CD4-positive, alpha-beta T cell (primary cell): ENCODE measurements at regions of chr6 and their contacts with region 1.

Region 1: GRCh38 chr6:156686995-156687788 is 90.0 kb upstream of the ARID1B start:
- DNase-seq: peak; percentile 53 to 94 (median 76)
- ATAC-seq: peak; percentile 76
- H3K4me3 ChIP-seq: peak overlapping the region; percentile 82
- H3K4me3 Mint-ChIP-seq: peak overlapping the region; percentile 92
- H3K27ac ChIP-seq: peak overlapping the region; percentile 91 to 97
- H3K27ac Mint-ChIP-seq: peak overlapping the region; percentile 92
- H3K4me1 ChIP-seq: peaks cover 14% of the 10 kb centered on the region
- H3K4me1 Mint-ChIP-seq: peaks cover 24% of the 10 kb centered on the region
- H3K27me3 ChIP-seq: no peaks in the 10 kb centered on the region
- H3K27me3 Mint-ChIP-seq: no peaks in the 10 kb centered on the region
- CTCF ChIP-seq: no peak

Region 2: DNA sequence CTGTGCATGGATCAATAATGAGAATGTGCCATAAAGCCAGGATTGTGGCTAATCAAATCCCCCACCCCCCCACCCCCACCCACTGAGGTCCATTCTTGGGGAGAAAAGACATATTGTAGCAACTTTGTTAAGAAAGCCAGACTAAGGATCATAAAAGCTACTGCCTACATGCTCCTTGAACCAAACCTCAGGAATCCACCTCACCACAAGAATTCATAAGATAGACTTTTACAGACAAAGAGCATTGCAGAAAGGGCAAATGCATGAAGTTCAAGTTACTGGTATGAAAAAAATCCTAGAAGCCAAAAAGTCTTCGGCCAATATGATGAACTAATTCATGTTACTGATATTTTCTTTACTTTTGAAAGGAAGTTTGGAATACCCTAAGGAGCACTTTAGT is 97.9 kb before region 1 on chr6:
- CTCF ChIA-PET with region 1: no interaction called
- POLR2A ChIA-PET with region 1: no interaction called
- intact Hi-C with region 1: no loop called
- DNase-seq: no peak
- ATAC-seq: no peak
- H3K4me3 ChIP-seq: no peak overlapping the region
- H3K4me3 Mint-ChIP-seq: no peak overlapping the region
- H3K27ac ChIP-seq: no peak overlapping the region
- H3K27ac Mint-ChIP-seq: no peak overlapping the region
- H3K4me1 ChIP-seq: no peaks in the 10 kb centered on the region
- H3K4me1 Mint-ChIP-seq: no peaks in the 10 kb centered on the region
- H3K27me3 ChIP-seq: peaks cover 0 to 3% of the 10 kb centered on the region in 2 experiments
- H3K27me3 Mint-ChIP-seq: no peaks in the 10 kb centered on the region
- CTCF ChIP-seq: no peak

Region 3: GRCh38 chr6:156719720-156720563 is 32.8 kb after region 1 on chr6:
- CTCF ChIA-PET with region 1: interaction called, 3 read pairs
- POLR2A ChIA-PET with region 1: interaction called, 7 read pairs
- intact Hi-C with region 1: loop called (anchors 2 kb)
- DNase-seq: peak; percentile 51 to 90 (median 79)
- ATAC-seq: peak; percentile 90
- H3K4me3 ChIP-seq: peak overlapping the region; percentile 62
- H3K4me3 Mint-ChIP-seq: peak overlapping the region; percentile 91
- H3K27ac ChIP-seq: peak overlapping the region; percentile 51 to 52
- H3K27ac Mint-ChIP-seq: peak overlapping the region; percentile 97
- H3K4me1 ChIP-seq: peaks cover 15% of the 10 kb centered on the region
- H3K4me1 Mint-ChIP-seq: peaks cover 26% of the 10 kb centered on the region
- H3K27me3 ChIP-seq: no peaks in the 10 kb centered on the region
- H3K27me3 Mint-ChIP-seq: no peaks in the 10 kb centered on the region
- CTCF ChIP-seq: no peak

Region 4: DNA sequence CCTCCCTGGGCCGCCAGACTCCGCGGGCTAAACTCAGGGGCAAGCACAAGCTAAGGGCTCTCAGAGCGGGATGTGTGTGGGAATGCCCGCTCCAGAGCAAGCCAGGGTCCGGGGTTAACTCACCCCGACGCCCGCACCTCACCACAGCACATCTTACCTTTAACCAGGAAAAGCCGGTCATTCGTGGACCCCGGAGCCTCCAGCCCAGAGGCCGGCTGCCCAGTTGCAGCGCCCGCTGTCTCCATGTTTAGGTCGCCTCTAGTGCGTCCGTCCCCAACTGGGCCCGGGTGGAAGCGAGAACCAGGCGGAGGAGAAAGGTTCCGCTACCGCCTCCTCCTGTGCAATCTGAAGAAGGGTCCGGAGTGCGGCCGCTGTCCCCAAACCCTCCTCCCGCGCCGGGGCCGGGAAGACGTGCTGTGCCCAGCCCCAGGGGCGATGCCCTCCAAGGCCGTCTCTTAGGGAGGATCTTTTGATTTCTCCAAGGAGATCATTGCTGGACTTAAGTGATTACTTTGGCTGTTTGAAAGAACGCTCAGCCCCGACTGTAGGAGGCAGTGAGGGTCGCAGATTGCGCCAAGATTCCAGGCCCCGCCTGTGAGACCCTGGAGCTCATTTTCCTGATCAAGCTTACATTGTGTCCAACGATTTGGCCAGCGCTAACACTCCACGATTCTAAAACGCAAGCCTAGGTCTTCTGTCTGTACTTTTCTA is 636.2 kb after region 1 on chr6 and contains the start of gene TMEM242:
- CTCF ChIA-PET with region 1: no interaction called
- POLR2A ChIA-PET with region 1: no interaction called
- intact Hi-C with region 1: loop called in 1 of 2 experiments (anchors 2 kb)
- DNase-seq: peak; percentile 69 to 92 (median 86)
- ATAC-seq: peak; percentile 90
- H3K4me3 ChIP-seq: peak within 1 kb of the TSS; percentile 91
- H3K4me3 Mint-ChIP-seq: peak within 1 kb of the TSS; percentile 90
- H3K27ac ChIP-seq: peak within 1 kb of the TSS; percentile 57 to 77
- H3K27ac Mint-ChIP-seq: peak within 1 kb of the TSS; percentile 74
- H3K4me1 ChIP-seq: peaks cover 17% of the 10 kb centered on the region
- H3K4me1 Mint-ChIP-seq: peaks cover 35% of the 10 kb centered on the region
- H3K27me3 ChIP-seq: peaks cover 0 to 3% of the 10 kb centered on the region in 2 experiments
- H3K27me3 Mint-ChIP-seq: peaks cover 27% of the 10 kb centered on the region
- CTCF ChIP-seq: peak; percentile 17
- total RNA-seq, gene TMEM242: 13.6 to 15.6 TPM